Panc1 (cell line): ENCODE measurements at regions of chr6 and their contacts with region 1.

Region 1: DNA sequence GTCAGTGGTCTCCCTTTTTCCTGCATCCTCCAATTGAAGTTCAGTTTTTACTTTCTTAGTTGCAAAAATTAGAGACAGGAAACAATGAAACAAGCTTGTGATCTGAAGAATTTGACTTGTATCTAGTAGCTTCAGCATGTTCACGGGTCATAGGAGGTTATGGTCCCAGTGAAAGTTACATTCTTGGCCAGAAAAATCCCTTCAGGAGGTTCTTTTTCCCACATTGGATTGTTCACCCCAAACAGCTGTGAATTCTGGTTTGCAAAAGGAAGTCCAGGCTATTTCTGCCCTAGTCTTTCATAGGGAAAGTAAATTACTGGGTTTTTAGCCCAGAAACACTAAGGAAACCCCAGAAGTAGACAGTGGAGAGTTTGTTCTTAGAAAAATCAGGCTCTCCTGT is 8.1 kb downstream of the ANKS1A start:
- DNase-seq: no peak
- ATAC-seq: no peak
- H3K4me3 ChIP-seq: no peak overlapping the region
- H3K27ac ChIP-seq: no peak overlapping the region
- H3K4me1 ChIP-seq: peaks cover 6% of the 10 kb centered on the region; the same call in 1 of the 2 replicates
- H3K27me3 ChIP-seq: no peaks in the 10 kb centered on the region
- CTCF ChIP-seq: no peak

Region 2: DNA sequence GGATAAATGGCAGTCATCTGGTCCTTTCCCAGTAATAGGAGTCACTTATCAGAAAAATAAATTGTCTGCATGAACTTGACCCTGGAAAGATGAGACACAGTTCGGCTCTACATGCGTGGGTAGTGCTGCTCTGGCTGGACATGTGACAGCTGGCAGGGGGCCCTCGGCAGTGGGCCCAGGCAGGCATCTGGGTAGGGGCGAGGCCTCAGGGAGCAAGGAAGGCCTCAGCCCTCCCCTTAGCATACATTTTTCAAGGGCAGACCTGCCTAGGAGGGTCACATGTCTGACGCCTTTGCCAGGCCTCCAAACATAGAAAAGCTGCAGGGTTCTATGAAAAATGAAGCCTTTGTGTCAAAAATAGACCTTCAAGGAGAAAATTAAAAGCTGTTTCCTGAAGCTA is 187.7 kb before region 1 on chr6:
- CTCF ChIA-PET with region 1: no interaction called
- POLR2A ChIA-PET with region 1: no interaction called
- in situ Hi-C with region 1: no loop called
- intact Hi-C with region 1: no loop called
- DNase-seq: no peak
- ATAC-seq: no peak
- H3K4me3 ChIP-seq: no peak overlapping the region
- H3K27ac ChIP-seq: no peak overlapping the region
- H3K4me1 ChIP-seq: no peaks in the 10 kb centered on the region
- H3K27me3 ChIP-seq: no peaks in the 10 kb centered on the region
- CTCF ChIP-seq: no peak

Region 3: DNA sequence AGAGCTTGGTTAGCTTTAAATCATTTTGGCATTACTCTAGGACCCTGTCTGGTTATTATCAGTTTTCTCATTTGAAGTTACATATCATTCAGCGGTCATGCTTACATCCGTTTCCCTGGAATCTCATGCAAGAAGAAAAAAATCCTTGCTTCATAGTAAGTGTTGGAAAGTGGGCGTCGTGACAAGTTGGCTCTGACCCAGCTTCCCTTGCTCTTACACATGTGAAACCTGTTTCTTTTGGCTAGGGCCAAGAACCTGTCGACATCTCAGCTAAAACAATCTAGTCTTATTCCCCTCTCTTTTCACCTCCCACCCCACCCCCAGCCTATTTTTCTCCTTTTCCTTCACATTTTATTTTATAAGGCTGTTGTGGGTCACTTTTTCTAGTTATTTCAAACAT is 37.4 kb after region 1 on chr6:
- CTCF ChIA-PET with region 1: no interaction called
- POLR2A ChIA-PET with region 1: interaction called, 15 read pairs
- in situ Hi-C with region 1: no loop called
- intact Hi-C with region 1: no loop called
- DNase-seq: no peak
- ATAC-seq: no peak
- H3K4me3 ChIP-seq: no peak overlapping the region
- H3K27ac ChIP-seq: no peak overlapping the region
- H3K4me1 ChIP-seq: no peaks in the 10 kb centered on the region
- H3K27me3 ChIP-seq: no peaks in the 10 kb centered on the region
- CTCF ChIP-seq: no peak

Region 4: DNA sequence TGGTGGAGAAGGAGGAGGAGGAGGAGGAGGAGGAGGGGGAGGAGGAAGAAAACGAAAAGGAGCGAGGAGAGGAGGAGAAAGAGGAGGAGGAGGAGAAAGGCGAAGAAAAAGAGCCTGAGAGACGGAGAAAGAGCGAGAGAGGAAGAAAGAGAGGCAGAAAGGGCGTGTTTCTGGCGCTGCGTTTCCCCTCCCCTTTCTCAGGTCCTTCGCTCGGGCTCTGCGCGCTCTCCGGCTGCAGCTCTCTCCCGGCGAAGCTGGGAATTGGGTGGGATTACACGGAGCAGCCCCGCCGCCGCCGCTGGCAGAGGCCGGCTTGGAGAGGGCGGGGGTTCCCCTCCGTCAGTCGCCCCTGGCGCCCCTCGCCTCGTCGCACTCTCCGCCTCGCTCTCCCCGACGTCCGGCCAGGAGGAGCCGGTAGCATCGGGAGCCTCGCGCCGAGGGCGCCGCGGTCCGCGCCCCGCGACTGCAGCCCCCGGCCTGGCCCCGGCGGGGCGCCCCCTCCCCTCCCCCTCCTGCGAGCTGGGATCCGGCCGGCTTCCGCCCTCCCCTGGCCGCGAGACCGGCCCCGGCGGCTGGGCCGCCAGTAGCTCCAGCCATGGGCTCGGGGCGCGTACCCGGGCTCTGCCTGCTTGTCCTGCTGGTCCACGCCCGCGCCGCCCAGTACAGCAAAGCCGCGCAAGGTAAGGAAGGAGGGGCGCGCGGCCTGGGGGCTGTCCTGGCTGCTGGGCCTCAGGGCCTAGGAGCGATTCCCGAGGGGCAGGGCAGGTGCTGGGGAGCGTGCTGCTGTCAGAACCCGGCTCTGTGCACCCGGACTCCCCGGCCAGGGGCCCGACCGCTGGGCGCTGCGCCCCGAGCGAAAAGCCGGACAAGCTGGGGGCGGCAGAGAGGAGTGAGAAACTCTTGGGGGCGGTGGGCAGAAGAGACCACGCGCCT is 317.0 kb after region 1 on chr6 and contains the start of gene SCUBE3:
- CTCF ChIA-PET with region 1: no interaction called
- POLR2A ChIA-PET with region 1: interaction called, 10 read pairs
- in situ Hi-C with region 1: no loop called
- intact Hi-C with region 1: no loop called
- DNase-seq: no peak
- ATAC-seq: peak; percentile 75
- H3K4me3 ChIP-seq: peak within 1 kb of the TSS; percentile 49 to 53
- H3K27ac ChIP-seq: no peak within 1 kb of the TSS
- H3K4me1 ChIP-seq: peaks cover 10% of the 10 kb centered on the region; the same call in 1 of the 2 replicates
- H3K27me3 ChIP-seq: no peaks in the 10 kb centered on the region; the same call in 1 of the 2 replicates
- CTCF ChIP-seq: no peak
- total RNA-seq, gene SCUBE3: 1.6 TPM